Activated T-helper 2 cell treated with anti-CD3 and anti-CD28 coated beads, Interferon-gamma antibody, Interleukin-2, Interleukin-4, amounts not matched to agents 10 μg/mL and 5 μg/mL and 100 μg/mL, durations not matched to agents 14 hours and 24 hours and 36 hours (primary cell): ENCODE measurements at regions of chr14 and their contacts with region 1.

Region 1: DNA sequence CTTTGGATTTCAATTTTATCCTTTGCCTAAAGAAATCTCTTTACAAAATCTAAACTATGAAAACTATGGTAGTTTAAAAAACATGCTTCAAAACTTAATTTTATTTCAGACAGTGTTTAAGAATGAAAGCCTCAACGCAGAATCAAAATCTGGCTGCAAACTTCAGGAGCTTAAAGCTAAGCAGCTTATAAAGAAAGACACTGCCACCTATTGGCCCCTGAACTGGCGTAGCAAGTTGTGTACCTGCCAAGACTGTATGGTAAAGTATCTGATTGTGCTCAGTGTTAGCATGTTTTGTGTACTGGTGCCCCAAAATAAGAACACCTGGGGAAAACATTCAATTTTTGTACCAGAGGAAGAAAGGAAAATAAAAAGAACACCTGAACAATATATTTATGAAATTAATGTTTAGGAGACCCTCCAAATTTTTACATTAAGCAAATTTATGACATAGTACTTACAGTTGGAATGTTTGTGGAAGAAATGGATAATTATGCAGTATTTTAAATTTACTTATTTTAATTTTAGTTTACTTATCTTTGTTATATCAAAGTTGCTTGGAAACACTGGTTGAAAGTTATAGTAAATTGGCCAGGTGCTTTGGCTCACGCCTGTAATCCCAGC is 12.2 kb downstream of the UBR7 start:
- DNase-seq: no peak
- H3K4me3 Mint-ChIP-seq: no peak overlapping the region
- H3K27ac Mint-ChIP-seq: no peak overlapping the region
- H3K4me1 Mint-ChIP-seq: no peaks in the 10 kb centered on the region
- H3K27me3 Mint-ChIP-seq: no peaks in the 10 kb centered on the region

Region 2: GRCh38 chr14:93175492-93175891 is 43.7 kb before region 1 on chr14:
- intact Hi-C with region 1: loop called (anchors 5 kb)
- DNase-seq: no peak
- H3K4me3 Mint-ChIP-seq: no peak overlapping the region
- H3K27ac Mint-ChIP-seq: no peak overlapping the region
- H3K4me1 Mint-ChIP-seq: peaks cover 5% of the 10 kb centered on the region
- H3K27me3 Mint-ChIP-seq: peaks cover 3% of the 10 kb centered on the region

Region 3: DNA sequence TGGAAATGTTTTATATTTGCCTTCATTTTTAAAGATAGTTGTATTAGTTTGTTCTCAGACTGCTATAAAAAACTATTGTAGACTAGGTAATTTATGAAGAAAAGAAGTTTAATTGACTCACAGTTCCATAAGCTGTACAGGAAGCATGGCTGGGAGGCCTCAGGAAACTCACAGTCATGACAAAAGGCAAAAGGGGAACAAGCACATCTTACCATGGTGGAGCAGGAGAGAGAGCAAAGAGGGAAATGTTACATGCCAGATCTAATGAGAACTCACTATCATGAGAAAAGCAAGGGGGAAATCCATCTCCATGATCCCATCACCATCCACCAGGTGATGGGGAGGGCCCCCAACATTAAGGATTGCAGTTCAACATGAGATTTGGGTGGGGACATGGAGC is 176.0 kb after region 1 on chr14:
- intact Hi-C with region 1: no loop called
- DNase-seq: no peak
- H3K4me3 Mint-ChIP-seq: no peak overlapping the region
- H3K27ac Mint-ChIP-seq: no peak overlapping the region
- H3K4me1 Mint-ChIP-seq: no peaks in the 10 kb centered on the region
- H3K27me3 Mint-ChIP-seq: no peaks in the 10 kb centered on the region